CD8-positive, alpha-beta T cell (primary cell): ENCODE measurements at regions of chr10 and their contacts with region 1.

Region 1: GRCh38 chr10:118754720-118755480 is at the start of gene CACUL1:
- DNase-seq: peak; percentile 99 to 100 (median 100)
- ATAC-seq: peak; percentile 97
- H3K4me3 ChIP-seq: peak within 1 kb of the TSS; percentile 86 to 92
- H3K4me3 Mint-ChIP-seq: peak within 1 kb of the TSS; percentile 93
- H3K27ac ChIP-seq: peak within 1 kb of the TSS; percentile 79 to 83
- H3K27ac Mint-ChIP-seq: peak within 1 kb of the TSS; percentile 92
- H3K4me1 ChIP-seq: peaks cover 29% of the 10 kb centered on the region
- H3K4me1 Mint-ChIP-seq: peaks cover 36% of the 10 kb centered on the region
- H3K27me3 ChIP-seq: peaks cover 0 to 2% of the 10 kb centered on the region in 2 experiments
- H3K27me3 Mint-ChIP-seq: no peaks in the 10 kb centered on the region
- CTCF ChIP-seq: no peak
- total RNA-seq, gene CACUL1: 40.8 to 46.8 TPM

Region 2: GRCh38 chr10:118341791-118342637 is 412.9 kb before region 1 on chr10 and contains the start of gene FAM204A:
- CTCF ChIA-PET with region 1: no interaction called
- POLR2A ChIA-PET with region 1: no interaction called
- intact Hi-C with region 1: loop called in 1 of 2 experiments (anchors 1 kb)
- DNase-seq: peak; percentile 95 to 99 (median 97)
- ATAC-seq: peak; percentile 94
- H3K4me3 ChIP-seq: peak within 1 kb of the TSS; percentile 81 to 86
- H3K4me3 Mint-ChIP-seq: peak within 1 kb of the TSS; percentile 96
- H3K27ac ChIP-seq: peak within 1 kb of the TSS; percentile 51 to 72
- H3K27ac Mint-ChIP-seq: peak within 1 kb of the TSS; percentile 95
- H3K4me1 ChIP-seq: peaks cover 22% of the 10 kb centered on the region
- H3K4me1 Mint-ChIP-seq: peaks cover 53% of the 10 kb centered on the region
- H3K27me3 ChIP-seq: no peaks in the 10 kb centered on the region
- H3K27me3 Mint-ChIP-seq: no peaks in the 10 kb centered on the region
- CTCF ChIP-seq: no peak
- total RNA-seq, gene FAM204A: 44.8 to 51.7 TPM

Region 3: DNA sequence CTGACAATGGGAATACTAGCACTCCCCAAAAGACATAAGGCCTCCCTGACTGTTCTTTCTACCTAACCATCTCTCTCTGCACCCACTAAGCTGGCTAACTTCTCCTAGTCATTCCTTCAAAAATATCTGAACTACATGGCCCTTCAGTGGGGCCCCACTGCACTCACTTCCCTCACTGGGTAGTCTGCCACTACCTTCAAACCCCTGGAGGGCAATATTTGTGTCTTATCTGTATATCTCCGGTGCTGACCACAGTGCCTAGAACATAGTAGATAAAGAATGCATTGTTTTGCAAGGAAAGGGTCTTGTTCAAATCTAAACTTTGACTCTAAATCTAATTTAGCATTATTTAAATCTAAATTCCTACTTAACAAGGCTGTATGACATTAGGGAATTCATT is 44.4 kb before region 1 on chr10:
- CTCF ChIA-PET with region 1: no interaction called
- POLR2A ChIA-PET with region 1: no interaction called
- intact Hi-C with region 1: no loop called
- DNase-seq: no peak
- ATAC-seq: no peak
- H3K4me3 ChIP-seq: no peak overlapping the region
- H3K4me3 Mint-ChIP-seq: no peak overlapping the region
- H3K27ac ChIP-seq: no peak overlapping the region
- H3K27ac Mint-ChIP-seq: no peak overlapping the region
- H3K4me1 ChIP-seq: no peaks in the 10 kb centered on the region
- H3K4me1 Mint-ChIP-seq: peaks cover 7% of the 10 kb centered on the region
- H3K27me3 ChIP-seq: no peaks in the 10 kb centered on the region
- H3K27me3 Mint-ChIP-seq: no peaks in the 10 kb centered on the region
- CTCF ChIP-seq: no peak

Region 4: GRCh38 chr10:118720685-118721538 is 34.0 kb before region 1 on chr10:
- CTCF ChIA-PET with region 1: interaction called, 10 read pairs
- POLR2A ChIA-PET with region 1: interaction called, 3 read pairs
- intact Hi-C with region 1: no loop called
- DNase-seq: peak in 8 of 9 experiments; percentile 32 to 75 (median 70)
- ATAC-seq: peak; percentile 59
- H3K4me3 ChIP-seq: no peak overlapping the region
- H3K4me3 Mint-ChIP-seq: no peak overlapping the region
- H3K27ac ChIP-seq: no peak overlapping the region
- H3K27ac Mint-ChIP-seq: no peak overlapping the region
- H3K4me1 ChIP-seq: no peaks in the 10 kb centered on the region
- H3K4me1 Mint-ChIP-seq: peaks cover 9% of the 10 kb centered on the region
- H3K27me3 ChIP-seq: no peaks in the 10 kb centered on the region
- H3K27me3 Mint-ChIP-seq: no peaks in the 10 kb centered on the region
- CTCF ChIP-seq: peak; percentile 95

Region 5: GRCh38 chr10:119165171-119166110 is 410.5 kb after region 1 on chr10 and contains the start of gene SFXN4:
- CTCF ChIA-PET with region 1: no interaction called
- POLR2A ChIA-PET with region 1: no interaction called
- intact Hi-C with region 1: loop called in 1 of 2 experiments (anchors 10 kb)
- DNase-seq: peak; percentile 59 to 89 (median 77)
- ATAC-seq: peak; percentile 93
- H3K4me3 ChIP-seq: peak within 1 kb of the TSS; percentile 49 to 80
- H3K4me3 Mint-ChIP-seq: peak within 1 kb of the TSS; percentile 95
- H3K27ac ChIP-seq: peak within 1 kb of the TSS; percentile 61 to 71
- H3K27ac Mint-ChIP-seq: peak within 1 kb of the TSS; percentile 96
- H3K4me1 ChIP-seq: peaks cover 18% of the 10 kb centered on the region
- H3K4me1 Mint-ChIP-seq: peaks cover 34% of the 10 kb centered on the region
- H3K27me3 ChIP-seq: no peaks in the 10 kb centered on the region
- H3K27me3 Mint-ChIP-seq: no peaks in the 10 kb centered on the region
- CTCF ChIP-seq: no peak
- total RNA-seq, gene SFXN4: 10.5 to 10.8 TPM

Region 6: DNA sequence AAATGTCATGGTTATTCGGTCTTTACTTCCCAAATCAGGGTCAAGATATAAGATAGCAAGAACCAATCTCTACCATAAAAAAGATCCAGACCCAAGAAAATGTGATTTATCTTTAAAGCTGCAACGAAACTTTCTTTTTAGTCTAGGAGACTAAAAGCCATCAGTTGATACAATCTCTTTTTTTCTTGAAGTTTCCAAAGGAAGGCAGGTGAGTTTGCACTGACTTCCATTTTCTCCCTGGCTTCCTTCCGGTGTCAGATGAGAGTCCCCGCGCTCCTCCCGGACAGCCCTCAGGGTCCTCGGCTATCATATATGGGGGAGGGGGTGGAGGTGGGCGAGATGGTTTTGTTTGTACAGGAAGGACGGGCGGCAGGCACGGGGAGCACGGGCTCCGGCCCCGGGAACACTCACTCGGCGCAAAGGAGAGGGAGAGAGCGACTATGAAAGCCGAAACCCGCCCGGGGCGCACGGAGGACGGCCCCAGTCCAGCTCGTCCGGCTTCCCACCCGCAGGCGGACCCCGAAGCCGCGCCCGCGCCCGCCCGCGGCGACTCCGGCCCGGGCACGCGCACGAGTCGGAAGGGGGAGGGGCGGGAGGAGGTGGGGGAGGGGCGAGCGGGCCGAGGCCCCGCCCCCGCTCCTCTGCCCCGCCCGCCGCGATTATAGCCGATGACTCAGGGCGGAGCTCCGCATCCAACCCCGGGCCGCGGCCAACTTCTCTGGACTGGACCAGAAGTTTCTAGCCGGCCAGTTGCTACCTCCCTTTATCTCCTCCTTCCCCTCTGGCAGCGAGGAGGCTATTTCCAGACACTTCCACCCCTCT is 896.0 kb after region 1 on chr10 and contains the start of gene BAG3:
- CTCF ChIA-PET with region 1: no interaction called
- POLR2A ChIA-PET with region 1: no interaction called
- intact Hi-C with region 1: loop called (anchors 5 to 10 kb)
- DNase-seq: peak; percentile 57 to 88 (median 76)
- ATAC-seq: peak; percentile 76
- H3K4me3 ChIP-seq: peak within 1 kb of the TSS; percentile 94 to 95
- H3K4me3 Mint-ChIP-seq: peak within 1 kb of the TSS; percentile 98
- H3K27ac ChIP-seq: peak within 1 kb of the TSS; percentile 78 to 88
- H3K27ac Mint-ChIP-seq: peak within 1 kb of the TSS; percentile 95
- H3K4me1 ChIP-seq: peaks cover 36% of the 10 kb centered on the region
- H3K4me1 Mint-ChIP-seq: peaks cover 44% of the 10 kb centered on the region
- H3K27me3 ChIP-seq: no peaks in the 10 kb centered on the region
- H3K27me3 Mint-ChIP-seq: no peaks in the 10 kb centered on the region
- CTCF ChIP-seq: no peak
- total RNA-seq, gene BAG3: 20.6 to 21.8 TPM